ENCODE measurements at regions of chr2 and their contacts with region 1.

Region 1: GRCh38 chr2:171598713-171599319 is 76.5 kb downstream of the CYBRD1 start:
- DNase-seq: peak; percentile 66
- ATAC-seq: peak; percentile 98
- H3K4me3 Mint-ChIP-seq: no peak overlapping the region
- H3K27ac Mint-ChIP-seq: no peak overlapping the region
- H3K4me1 Mint-ChIP-seq: peaks cover 2% of the 10 kb centered on the region
- H3K27me3 Mint-ChIP-seq: peaks cover 19% of the 10 kb centered on the region

Region 2: GRCh38 chr2:171307560-171307959 is 291.3 kb before region 1 on chr2:
- CTCF ChIA-PET with region 1: no interaction called
- DNase-seq: no peak
- ATAC-seq: no peak
- H3K4me3 Mint-ChIP-seq: no peak overlapping the region
- H3K27ac Mint-ChIP-seq: no peak overlapping the region
- H3K4me1 Mint-ChIP-seq: no peaks in the 10 kb centered on the region
- H3K27me3 Mint-ChIP-seq: no peaks in the 10 kb centered on the region

Region 3: GRCh38 chr2:171416009-171416926 is 182.5 kb before region 1 on chr2:
- CTCF ChIA-PET with region 1: no interaction called
- DNase-seq: peak; percentile 89
- ATAC-seq: peak; percentile 95
- H3K4me3 Mint-ChIP-seq: no peak overlapping the region
- H3K27ac Mint-ChIP-seq: peak overlapping the region; percentile 61
- H3K4me1 Mint-ChIP-seq: peaks cover 27% of the 10 kb centered on the region
- H3K27me3 Mint-ChIP-seq: no peaks in the 10 kb centered on the region

Region 4: DNA sequence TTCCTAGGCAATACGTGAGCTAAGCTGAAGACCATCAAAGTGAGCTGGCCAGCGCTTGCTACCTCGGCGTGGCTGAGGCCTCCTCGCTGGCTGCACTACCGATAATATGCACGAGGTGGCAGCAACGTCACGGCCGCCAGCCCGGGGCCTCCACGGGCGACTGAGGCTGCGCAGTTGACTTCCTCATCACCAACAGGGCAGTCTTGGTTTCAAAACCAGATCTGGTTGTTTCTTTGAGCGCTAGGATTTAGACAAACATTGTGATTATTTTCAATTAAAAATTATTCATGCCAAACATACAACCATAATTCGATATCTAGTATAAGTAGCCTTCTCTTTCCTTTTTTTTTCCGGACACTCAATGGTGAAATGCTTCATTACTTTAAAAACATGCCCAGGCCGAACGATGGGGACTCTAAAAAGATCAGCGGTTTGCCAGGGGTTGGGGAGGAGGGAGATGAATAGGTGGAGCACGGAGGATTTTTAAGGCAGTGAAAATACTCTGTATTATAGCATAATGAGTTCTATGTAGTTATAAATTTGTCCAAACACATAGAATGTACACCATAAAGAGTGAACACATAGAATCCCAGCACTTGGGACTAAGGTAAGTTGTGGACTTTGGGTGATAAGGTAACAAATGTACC is 24.5 kb before region 1 on chr2:
- CTCF ChIA-PET with region 1: interaction called, 16 read pairs
- DNase-seq: peak; percentile 85
- ATAC-seq: peak; percentile 99
- H3K4me3 Mint-ChIP-seq: no peak overlapping the region
- H3K27ac Mint-ChIP-seq: peak overlapping the region; percentile 28
- H3K4me1 Mint-ChIP-seq: peaks cover 6% of the 10 kb centered on the region
- H3K27me3 Mint-ChIP-seq: peaks cover 15% of the 10 kb centered on the region